PC-3 (cell line): ENCODE measurements at regions of chr6 and their contacts with region 1.

Region 1: GRCh38 chr6:46781478-46782378 is 11.5 kb upstream of the MEP1A start:
- DNase-seq: peak; percentile 87
- ATAC-seq: peak; percentile 88
- H3K4me3 ChIP-seq: no peak overlapping the region
- H3K27ac ChIP-seq: no peak overlapping the region
- H3K4me1 ChIP-seq: no peaks in the 10 kb centered on the region
- H3K27me3 ChIP-seq: no peaks in the 10 kb centered on the region
- CTCF ChIP-seq: peak; percentile 86

Region 2: GRCh38 chr6:46419576-46420002 is 362.1 kb before region 1 on chr6:
- CTCF ChIA-PET with region 1: no interaction called
- POLR2A ChIA-PET with region 1: no interaction called
- intact Hi-C with region 1: loop called (anchors 5 kb)
- DNase-seq: peak; percentile 83
- ATAC-seq: 0 out of 2 replicates have a peak, but pooled peaks have one; percentile 43
- H3K4me3 ChIP-seq: no peak overlapping the region
- H3K27ac ChIP-seq: no peak overlapping the region
- H3K4me1 ChIP-seq: peaks cover 8% of the 10 kb centered on the region
- H3K27me3 ChIP-seq: peaks cover 6% of the 10 kb centered on the region; the same call in 1 of the 2 replicates
- CTCF ChIP-seq: peak; percentile 76

Region 3: GRCh38 chr6:46704562-46704961 is 77.2 kb before region 1 on chr6:
- CTCF ChIA-PET with region 1: interaction called, 3 read pairs
- POLR2A ChIA-PET with region 1: no interaction called
- intact Hi-C with region 1: loop called (anchors 1 kb)
- DNase-seq: peak; percentile 80
- ATAC-seq: peak; percentile 90
- H3K4me3 ChIP-seq: no peak overlapping the region
- H3K27ac ChIP-seq: no peak overlapping the region
- H3K4me1 ChIP-seq: peaks cover 10% of the 10 kb centered on the region
- H3K27me3 ChIP-seq: no peaks in the 10 kb centered on the region
- CTCF ChIP-seq: peak; percentile 76

Region 4: GRCh38 chr6:46734867-46735719 is 46.6 kb before region 1 on chr6 and contains the start of gene PLA2G7:
- CTCF ChIA-PET with region 1: interaction called, 6 read pairs
- POLR2A ChIA-PET with region 1: no interaction called
- intact Hi-C with region 1: loop called (anchors 1 kb)
- DNase-seq: peak; percentile 69
- ATAC-seq: peak; percentile 65
- H3K4me3 ChIP-seq: peak within 1 kb of the TSS; percentile 87
- H3K27ac ChIP-seq: peak within 1 kb of the TSS; percentile 59
- H3K4me1 ChIP-seq: peaks cover 40% of the 10 kb centered on the region
- H3K27me3 ChIP-seq: no peaks in the 10 kb centered on the region
- CTCF ChIP-seq: no peak
- total RNA-seq, gene PLA2G7: 1.8 and 2.9 TPM in 2 replicates